Panc1 (cell line): ENCODE measurements at regions of chr17 and their contacts with region 1.

Region 1: GRCh38 chr17:9676742-9677387 is 31.5 kb downstream of the USP43 start:
- DNase-seq: peak; percentile 92
- ATAC-seq: peak; percentile 97
- H3K4me3 ChIP-seq: no peak overlapping the region
- H3K27ac ChIP-seq: peak overlapping the region; percentile 23; the same call in 1 of the 2 replicates
- H3K4me1 ChIP-seq: no peaks in the 10 kb centered on the region
- H3K27me3 ChIP-seq: no peaks in the 10 kb centered on the region
- CTCF ChIP-seq: no peak

Region 2: GRCh38 chr17:9575381-9576101 is 101.3 kb before region 1 on chr17 and contains the start of gene STX8:
- CTCF ChIA-PET with region 1: interaction called, 5 read pairs
- POLR2A ChIA-PET with region 1: interaction called, 6 read pairs
- in situ Hi-C with region 1: no loop called
- intact Hi-C with region 1: loop called (anchors 2 kb)
- DNase-seq: no peak
- ATAC-seq: peak; percentile 89
- H3K4me3 ChIP-seq: peak within 1 kb of the TSS; percentile 89 to 94
- H3K27ac ChIP-seq: peak within 1 kb of the TSS; percentile 79
- H3K4me1 ChIP-seq: no peaks in the 10 kb centered on the region
- H3K27me3 ChIP-seq: no peaks in the 10 kb centered on the region
- CTCF ChIP-seq: no peak
- total RNA-seq, gene STX8: 50.3 TPM

Region 3: DNA sequence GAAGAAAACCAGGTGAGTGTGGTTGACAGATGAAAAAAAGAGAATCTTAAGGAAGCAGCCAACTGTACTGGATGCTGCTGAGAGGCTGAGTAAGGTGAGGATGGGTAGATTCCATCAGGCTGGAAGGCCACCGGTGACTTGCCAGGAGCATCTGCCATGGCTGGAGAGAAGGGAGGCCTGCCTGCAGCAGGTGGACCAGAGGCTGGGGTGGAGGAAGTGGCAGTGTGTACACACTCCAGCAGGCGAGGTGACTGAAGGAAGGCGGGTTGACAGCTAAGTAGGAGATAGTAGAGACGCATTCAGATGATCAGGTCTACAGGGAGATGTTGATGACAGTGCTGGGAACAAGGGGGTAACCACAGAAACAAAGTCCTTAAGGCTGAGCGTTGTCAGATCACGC is 37.9 kb after region 1 on chr17:
- CTCF ChIA-PET with region 1: no interaction called
- POLR2A ChIA-PET with region 1: no interaction called
- in situ Hi-C with region 1: no loop called
- intact Hi-C with region 1: no loop called
- DNase-seq: no peak
- ATAC-seq: no peak
- H3K4me3 ChIP-seq: no peak overlapping the region
- H3K27ac ChIP-seq: no peak overlapping the region
- H3K4me1 ChIP-seq: no peaks in the 10 kb centered on the region
- H3K27me3 ChIP-seq: no peaks in the 10 kb centered on the region
- CTCF ChIP-seq: no peak